ENCODE measurements at regions of chr12 and their contacts with region 1.

Region 1: DNA sequence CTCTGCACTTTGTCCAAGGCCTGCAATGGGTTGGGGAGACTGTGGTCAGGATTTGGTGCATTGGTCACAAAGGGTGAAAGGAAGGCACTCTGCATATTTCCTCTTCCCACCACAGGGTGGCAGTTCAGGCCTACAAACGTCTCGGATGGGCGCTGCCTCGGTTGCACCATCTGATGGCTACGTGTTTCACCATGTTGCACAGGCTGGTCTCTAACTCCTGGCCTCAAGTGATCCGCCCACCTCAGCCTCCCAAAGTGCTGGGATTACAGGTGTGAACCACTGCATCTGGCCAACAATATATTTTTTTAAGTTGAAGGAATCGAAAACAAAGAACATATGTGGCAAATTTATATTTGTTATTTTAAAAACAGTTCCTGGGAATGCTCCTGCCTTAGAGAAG is 35.1 kb downstream of the TMBIM6 start:
- DNase-seq: peak; percentile 38 to 82 (median 74)
- H3K4me3 ChIP-seq: peak overlapping the region in 9 of 59 donors; percentile 2 to 53 (median 20)
- H3K27ac ChIP-seq: peak overlapping the region in 1 of 59 donors; percentile 16
- H3K27me3 ChIP-seq: no peaks in the 10 kb centered on the region
- CTCF ChIP-seq: peak; percentile 66 to 97 (median 86)

Region 2: GRCh38 chr12:49740930-49741881 is 35.2 kb before region 1 on chr12 and contains the start of gene TMBIM6:
- intact Hi-C with region 1: loop called in 1 of 2 experiments (anchors 5 kb)
- DNase-seq: peak; percentile 99 to 100 (median 100)
- H3K4me3 ChIP-seq: peak within 1 kb of the TSS; percentile 59 to 99 (median 92)
- H3K27ac ChIP-seq: peak within 1 kb of the TSS; percentile 75 to 99 (median 95)
- H3K27me3 ChIP-seq: no peaks in the 10 kb centered on the region
- CTCF ChIP-seq: peak; percentile 87 to 99 (median 96)
- total RNA-seq, gene TMBIM6: 290 to 477 (median 355) TPM

Region 3: GRCh38 chr12:49828133-49829091 is 52.0 kb after region 1 on chr12 and contains the start of gene NCKAP5L:
- intact Hi-C with region 1: loop called in 1 of 2 experiments (anchors 2 kb)
- DNase-seq: peak; percentile 90 to 95 (median 94)
- H3K4me3 ChIP-seq: peak within 1 kb of the TSS; percentile 53 to 95 (median 87)
- H3K27ac ChIP-seq: peak within 1 kb of the TSS in 58 of 59 donors; percentile 31 to 95 (median 89)
- H3K27me3 ChIP-seq: no peaks in the 10 kb centered on the region
- CTCF ChIP-seq: peak in 10 of 56 donors; percentile 3 to 29 (median 20)
- total RNA-seq, gene NCKAP5L: 17.3 to 37.7 (median 25.5) TPM

Region 4: DNA sequence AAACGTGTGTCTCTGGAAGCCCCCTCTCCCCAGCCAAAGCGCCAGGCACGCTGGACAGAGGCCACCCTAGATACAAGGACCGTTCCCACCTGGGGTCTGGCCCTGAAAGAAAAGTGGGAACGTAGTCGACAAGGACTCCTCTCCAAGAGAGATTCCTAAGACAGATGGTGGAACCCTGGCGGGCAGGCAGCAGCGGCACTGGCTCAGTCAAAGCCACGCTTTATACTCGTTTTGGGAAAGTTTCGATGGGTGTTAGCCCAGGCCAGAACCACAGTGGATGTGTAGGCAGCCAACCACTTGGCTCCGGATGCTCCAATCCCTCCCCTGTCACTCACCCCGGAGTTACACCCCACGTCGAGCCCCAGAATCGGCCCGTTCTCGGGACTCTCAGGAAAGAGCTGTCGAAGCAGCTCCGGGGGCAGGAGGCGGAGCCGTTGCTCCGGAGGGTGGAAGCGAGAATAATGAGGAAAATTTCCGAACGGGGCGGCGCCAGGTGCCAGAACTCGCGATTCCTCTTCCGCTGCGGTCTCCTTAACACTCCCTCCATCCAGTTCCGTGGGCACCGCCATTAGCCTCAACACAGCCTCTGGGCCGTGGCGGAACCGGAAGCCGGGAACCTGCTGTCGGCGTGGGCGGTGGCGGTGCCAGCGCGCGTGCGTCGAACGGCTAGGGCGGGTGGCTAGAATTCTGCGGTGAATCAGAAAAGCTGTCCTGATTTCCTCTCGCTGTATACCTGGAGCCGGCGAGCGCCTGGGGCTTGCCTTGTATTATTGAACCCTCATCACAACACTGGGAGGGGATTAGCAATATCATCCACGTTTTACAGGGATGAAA is 66.3 kb after region 1 on chr12 and contains the start of gene BCDIN3D:
- intact Hi-C with region 1: loop called (anchors 1 to 2 kb)
- DNase-seq: peak; percentile 81 to 94 (median 90)
- H3K4me3 ChIP-seq: peak within 1 kb of the TSS; percentile 51 to 96 (median 83)
- H3K27ac ChIP-seq: peak within 1 kb of the TSS; percentile 42 to 97 (median 87)
- H3K27me3 ChIP-seq: no peaks in the 10 kb centered on the region
- CTCF ChIP-seq: peak in 24 of 56 donors; percentile 5 to 55 (median 30)
- total RNA-seq, gene BCDIN3D: 2.4 to 8.0 (median 4.3) TPM

Region 5: DNA sequence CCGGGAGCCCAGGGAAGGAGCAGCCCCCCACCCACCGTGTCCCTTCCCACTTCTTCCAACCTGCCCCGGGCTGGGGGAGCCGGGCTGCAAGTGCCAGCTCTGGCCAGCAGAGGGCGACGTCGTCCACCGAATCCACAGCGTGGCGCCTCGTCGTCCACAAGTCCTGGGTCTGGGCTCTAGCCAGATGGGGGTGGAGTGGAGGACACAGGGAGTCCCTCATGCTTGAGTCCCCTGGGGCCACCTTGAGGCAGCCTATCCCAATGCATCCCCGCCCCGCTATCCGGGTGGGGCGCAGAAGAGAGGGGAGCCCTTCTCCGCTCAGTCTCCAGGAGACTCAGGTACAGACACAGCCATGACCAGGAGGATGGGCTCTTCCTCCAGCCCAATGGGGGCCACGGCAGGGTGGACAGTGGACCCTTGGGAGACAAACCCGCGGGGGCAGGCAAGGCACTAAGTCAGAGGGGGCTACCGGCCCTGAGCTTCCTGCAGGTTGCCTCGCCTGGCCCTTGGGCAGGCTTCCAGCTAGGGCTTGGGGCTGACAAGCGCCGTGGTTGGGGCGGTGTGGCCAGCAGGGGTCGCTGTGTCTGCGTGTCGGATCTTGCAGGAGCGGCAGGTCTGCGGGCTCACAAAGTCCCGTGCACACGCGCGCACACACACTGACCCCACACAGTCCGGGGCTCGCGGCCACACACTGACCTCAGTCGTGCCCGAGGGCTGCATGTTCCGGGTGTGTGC is 190.8 kb after region 1 on chr12:
- intact Hi-C with region 1: loop called (anchors 10 kb)
- DNase-seq: peak; percentile 89 to 96 (median 92)
- H3K4me3 ChIP-seq: peak overlapping the region; percentile 35 to 77 (median 58)
- H3K27ac ChIP-seq: peak overlapping the region in 47 of 59 donors; percentile 14 to 88 (median 76)
- H3K27me3 ChIP-seq: peaks cover 0 to under 1% (median 0%) of the 10 kb centered on the region in 45 donors
- CTCF ChIP-seq: peak; percentile 64 to 97 (median 85)

Region 6: DNA sequence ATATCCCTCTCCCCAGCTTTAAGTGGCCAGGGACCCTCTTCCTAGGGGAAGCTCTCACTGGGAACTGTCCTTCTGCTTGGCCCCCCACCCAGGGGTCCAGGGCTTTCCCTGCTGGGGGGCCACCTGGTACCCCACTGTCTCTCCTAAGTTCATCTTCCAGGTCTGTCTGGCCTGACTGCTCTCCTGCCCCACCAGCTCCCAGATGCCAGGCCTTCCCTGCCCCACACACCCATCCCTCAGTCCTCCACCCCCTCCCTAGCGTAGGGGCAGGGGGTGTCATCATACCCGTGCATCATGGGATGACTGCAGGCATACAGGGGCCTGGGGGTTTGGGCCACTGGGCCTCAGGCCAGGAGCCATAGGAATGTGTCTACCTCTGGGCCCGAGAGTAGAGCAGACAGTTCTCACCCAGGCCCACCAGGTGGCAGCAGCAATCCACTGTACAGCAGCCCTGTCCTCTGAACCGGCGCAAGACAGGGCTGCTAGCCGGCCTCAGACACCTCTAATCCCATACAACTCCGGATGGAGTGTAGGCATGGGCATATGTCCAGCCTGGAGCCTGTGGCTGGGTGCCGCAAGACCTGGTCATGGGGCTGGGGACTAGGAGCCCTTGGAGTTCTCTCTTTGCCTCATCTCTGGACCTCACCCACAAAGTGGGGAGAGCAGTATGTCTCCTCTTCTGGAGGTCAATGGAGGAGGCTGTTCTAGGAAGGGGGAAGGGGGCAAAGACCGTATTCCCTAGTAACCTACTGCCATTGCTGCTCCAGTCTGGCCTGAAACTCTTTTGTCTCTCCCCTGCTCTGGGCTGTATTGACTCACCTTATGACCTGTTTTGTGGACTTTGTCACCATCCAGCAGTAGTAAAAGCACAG is 298.8 kb after region 1 on chr12:
- intact Hi-C with region 1: loop called in 1 of 2 experiments (anchors 10 kb)
- DNase-seq: peak; percentile 80 to 88 (median 82)
- H3K4me3 ChIP-seq: peak overlapping the region in 1 of 59 donors; percentile 12
- H3K27ac ChIP-seq: peak overlapping the region in 3 of 59 donors; percentile 29 to 41 (median 37)
- H3K27me3 ChIP-seq: no peaks in the 10 kb centered on the region
- CTCF ChIP-seq: peak; percentile 71 to 98 (median 94)

Region 7: DNA sequence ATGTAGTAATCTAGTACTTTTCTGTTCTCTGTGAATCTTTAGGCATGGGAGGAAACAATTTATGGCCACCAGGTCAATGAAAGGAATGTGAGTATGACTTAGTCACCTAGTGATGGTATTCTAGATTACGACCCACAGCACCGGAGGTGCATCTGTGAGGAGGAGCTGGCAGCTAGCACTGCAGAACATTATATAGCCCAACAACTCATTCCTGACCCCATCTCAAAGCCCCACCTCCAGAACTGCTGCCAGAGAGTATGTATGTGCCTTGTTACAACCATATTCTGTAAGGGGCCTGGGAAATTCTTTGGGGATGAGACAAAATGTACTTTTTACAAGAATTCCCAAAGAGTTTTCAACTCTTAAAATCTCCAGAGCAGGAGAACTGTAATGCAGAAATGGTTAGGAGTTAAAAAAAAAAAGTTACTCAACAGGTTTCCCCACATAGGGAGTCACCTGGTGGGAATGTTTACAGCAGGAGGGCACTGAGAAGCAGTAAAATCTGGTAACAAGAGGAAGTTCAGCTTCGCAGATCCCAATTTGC is 425.6 kb after region 1 on chr12:
- intact Hi-C with region 1: no loop called
- DNase-seq: no peak
- H3K4me3 ChIP-seq: no peak overlapping the region
- H3K27ac ChIP-seq: no peak overlapping the region
- H3K27me3 ChIP-seq: no peaks in the 10 kb centered on the region
- CTCF ChIP-seq: no peak